Natural killer cell (primary cell): ENCODE measurements at regions of chr1 and their contacts with region 1.

Region 1: DNA sequence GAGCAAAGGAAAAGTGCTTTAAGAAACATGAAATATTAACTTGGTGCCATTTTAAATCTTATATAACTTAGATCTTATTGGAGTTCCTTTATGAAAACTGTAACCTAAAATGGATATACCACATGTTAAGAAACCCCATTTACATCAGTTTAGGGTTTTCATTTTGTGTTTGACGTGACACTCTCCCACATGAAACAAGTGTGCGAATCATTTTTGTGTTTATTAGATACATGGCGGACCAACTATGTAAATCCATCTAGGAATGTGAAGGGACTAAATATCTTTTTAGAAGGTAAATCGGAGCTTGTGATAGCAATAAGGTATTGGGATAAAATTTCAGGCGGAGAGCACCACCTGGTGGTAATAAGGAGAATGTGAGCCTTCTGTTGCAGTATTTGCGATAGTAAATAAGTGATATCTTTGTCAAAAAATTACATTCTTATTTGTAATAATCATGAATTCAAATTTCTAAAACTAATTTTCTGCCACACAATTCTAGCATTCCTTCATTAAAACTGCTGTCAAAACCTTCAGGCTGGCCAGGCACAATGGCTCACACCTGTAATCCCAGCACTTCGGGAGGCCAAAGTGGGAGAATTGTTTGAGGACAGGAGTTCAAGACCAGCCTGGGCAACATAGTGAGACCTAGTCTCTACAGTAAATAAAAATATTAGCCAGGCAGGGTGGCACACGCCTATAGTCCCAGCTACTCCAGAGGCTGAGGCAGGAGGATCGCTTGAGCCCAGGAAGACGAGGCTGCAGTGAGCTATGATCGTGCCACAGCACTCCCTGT is 31.3 kb downstream of the SMAP2 start:
- DNase-seq: peak in 1 of 2 donors; percentile 88
- ATAC-seq: peak; percentile 78 to 79 (median 79)
- H3K4me3 ChIP-seq: no peak overlapping the region
- H3K4me3 Mint-ChIP-seq: peak overlapping the region; percentile 55
- H3K27ac ChIP-seq: peak overlapping the region; percentile 23
- H3K27ac Mint-ChIP-seq: peak overlapping the region; percentile 84 to 89
- H3K4me1 ChIP-seq: peaks cover 41% of the 10 kb centered on the region
- H3K4me1 Mint-ChIP-seq: peaks cover 30 to 31% of the 10 kb centered on the region in 2 donors
- H3K27me3 ChIP-seq: no peaks in the 10 kb centered on the region
- H3K27me3 Mint-ChIP-seq: no peaks in the 10 kb centered on the region
- CTCF ChIP-seq: peak; percentile 92

Region 2: DNA sequence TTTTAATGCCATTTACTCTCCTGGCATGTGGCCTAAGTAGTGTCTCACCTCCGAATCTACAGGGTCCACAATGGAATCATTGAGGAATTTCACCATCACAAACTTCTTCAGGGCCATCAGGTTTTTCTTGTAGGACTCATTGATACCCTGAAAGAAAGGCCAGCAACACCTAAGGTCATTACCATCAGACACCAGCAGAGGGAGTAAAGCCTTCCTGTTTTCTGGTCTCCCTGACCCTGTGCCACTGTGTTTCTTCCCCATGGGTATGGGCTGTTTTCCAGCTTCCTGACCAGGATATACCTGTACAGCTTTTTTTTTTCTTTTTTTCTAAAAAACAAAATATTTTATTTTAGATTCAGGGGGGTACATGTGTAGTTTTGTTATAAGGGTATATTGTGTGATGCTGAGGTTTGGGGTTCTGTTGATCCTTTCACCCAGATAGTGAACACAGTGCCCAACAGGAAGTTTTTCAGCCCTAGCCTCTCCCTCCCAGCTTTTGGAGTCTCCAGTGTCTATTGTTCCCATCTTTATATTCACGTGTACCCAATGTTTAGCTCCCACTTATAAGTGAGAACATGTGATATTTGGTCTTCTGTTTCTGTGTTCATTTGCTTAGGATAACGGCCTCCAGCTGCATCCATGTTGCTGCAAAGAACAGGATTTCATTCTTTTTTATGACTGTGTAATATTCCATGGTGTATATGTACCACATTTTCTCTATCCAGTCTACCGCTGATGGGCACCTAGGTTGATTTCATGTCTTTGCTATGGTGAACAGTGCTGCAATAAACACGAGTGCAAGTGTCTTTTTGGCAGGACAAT is 326.1 kb before region 1 on chr1:
- intact Hi-C with region 1: loop called (anchors 10 kb)
- DNase-seq: peak in 1 of 2 donors; percentile 81
- ATAC-seq: peak; percentile 81 to 95 (median 83)
- H3K4me3 ChIP-seq: no peak overlapping the region
- H3K4me3 Mint-ChIP-seq: no peak overlapping the region
- H3K27ac ChIP-seq: no peak overlapping the region
- H3K27ac Mint-ChIP-seq: peak overlapping the region; percentile 42 to 44
- H3K4me1 ChIP-seq: peaks cover 6% of the 10 kb centered on the region
- H3K4me1 Mint-ChIP-seq: peaks cover 0 to 21% of the 10 kb centered on the region in 2 donors
- H3K27me3 ChIP-seq: no peaks in the 10 kb centered on the region
- H3K27me3 Mint-ChIP-seq: no peaks in the 10 kb centered on the region
- CTCF ChIP-seq: peak; percentile 84

Region 3: DNA sequence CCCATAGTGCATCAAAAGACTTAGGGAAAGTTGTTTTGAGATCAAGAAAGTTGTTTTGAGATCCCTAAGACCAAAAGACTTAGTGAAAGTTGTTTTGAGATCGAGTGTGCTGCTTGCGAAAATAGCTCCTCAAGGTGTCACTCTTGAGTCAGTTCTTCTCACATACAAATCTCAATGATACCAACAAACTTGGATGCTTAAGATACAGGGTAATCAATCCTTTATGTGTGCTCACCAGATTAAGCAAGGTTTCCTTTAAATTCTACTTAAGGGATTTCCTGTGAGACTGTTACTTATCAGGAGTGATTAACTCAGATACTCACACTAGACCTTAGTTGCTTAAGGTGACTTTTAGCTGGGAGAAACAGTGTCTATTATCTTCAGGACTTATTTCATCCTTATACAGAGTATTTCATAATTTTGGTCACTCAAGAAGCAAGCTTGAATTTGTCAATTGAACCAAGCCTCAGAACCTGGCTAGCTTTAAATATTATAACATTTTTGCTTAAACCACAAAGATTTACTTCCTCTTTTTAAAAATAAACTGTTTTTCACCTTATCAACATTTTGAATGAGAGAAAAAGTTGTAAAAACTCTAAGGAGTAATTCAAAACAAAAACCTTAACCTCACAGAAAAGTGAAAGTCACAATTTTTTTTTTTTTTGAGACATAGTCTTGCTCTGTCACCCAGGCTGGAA is 251.6 kb before region 1 on chr1:
- intact Hi-C with region 1: loop called (anchors 2 kb)
- DNase-seq: peak in 1 of 2 donors; percentile 85
- ATAC-seq: peak; percentile 66 to 89 (median 75)
- H3K4me3 ChIP-seq: no peak overlapping the region
- H3K4me3 Mint-ChIP-seq: no peak overlapping the region
- H3K27ac ChIP-seq: peak overlapping the region; percentile 31
- H3K27ac Mint-ChIP-seq: no peak overlapping the region
- H3K4me1 ChIP-seq: no peaks in the 10 kb centered on the region
- H3K4me1 Mint-ChIP-seq: peaks cover 0 to 5% of the 10 kb centered on the region in 2 donors
- H3K27me3 ChIP-seq: no peaks in the 10 kb centered on the region
- H3K27me3 Mint-ChIP-seq: peaks cover 3 to 12% of the 10 kb centered on the region in 2 donors
- CTCF ChIP-seq: peak; percentile 79

Region 4: GRCh38 chr1:40338745-40339424 is 66.0 kb before region 1 on chr1:
- intact Hi-C with region 1: loop called (anchors 1 kb)
- DNase-seq: peak; percentile 84 to 94
- ATAC-seq: peak; percentile 92 to 100 (median 99)
- H3K4me3 ChIP-seq: no peak overlapping the region
- H3K4me3 Mint-ChIP-seq: no peak overlapping the region
- H3K27ac ChIP-seq: no peak overlapping the region
- H3K27ac Mint-ChIP-seq: peak overlapping the region in 1 of 2 donors; percentile 32
- H3K4me1 ChIP-seq: peaks cover 13% of the 10 kb centered on the region
- H3K4me1 Mint-ChIP-seq: peaks cover 6 to 7% of the 10 kb centered on the region in 2 donors
- H3K27me3 ChIP-seq: no peaks in the 10 kb centered on the region
- H3K27me3 Mint-ChIP-seq: peaks cover 0 to 8% of the 10 kb centered on the region in 2 donors
- CTCF ChIP-seq: peak; percentile 99

Region 5: DNA sequence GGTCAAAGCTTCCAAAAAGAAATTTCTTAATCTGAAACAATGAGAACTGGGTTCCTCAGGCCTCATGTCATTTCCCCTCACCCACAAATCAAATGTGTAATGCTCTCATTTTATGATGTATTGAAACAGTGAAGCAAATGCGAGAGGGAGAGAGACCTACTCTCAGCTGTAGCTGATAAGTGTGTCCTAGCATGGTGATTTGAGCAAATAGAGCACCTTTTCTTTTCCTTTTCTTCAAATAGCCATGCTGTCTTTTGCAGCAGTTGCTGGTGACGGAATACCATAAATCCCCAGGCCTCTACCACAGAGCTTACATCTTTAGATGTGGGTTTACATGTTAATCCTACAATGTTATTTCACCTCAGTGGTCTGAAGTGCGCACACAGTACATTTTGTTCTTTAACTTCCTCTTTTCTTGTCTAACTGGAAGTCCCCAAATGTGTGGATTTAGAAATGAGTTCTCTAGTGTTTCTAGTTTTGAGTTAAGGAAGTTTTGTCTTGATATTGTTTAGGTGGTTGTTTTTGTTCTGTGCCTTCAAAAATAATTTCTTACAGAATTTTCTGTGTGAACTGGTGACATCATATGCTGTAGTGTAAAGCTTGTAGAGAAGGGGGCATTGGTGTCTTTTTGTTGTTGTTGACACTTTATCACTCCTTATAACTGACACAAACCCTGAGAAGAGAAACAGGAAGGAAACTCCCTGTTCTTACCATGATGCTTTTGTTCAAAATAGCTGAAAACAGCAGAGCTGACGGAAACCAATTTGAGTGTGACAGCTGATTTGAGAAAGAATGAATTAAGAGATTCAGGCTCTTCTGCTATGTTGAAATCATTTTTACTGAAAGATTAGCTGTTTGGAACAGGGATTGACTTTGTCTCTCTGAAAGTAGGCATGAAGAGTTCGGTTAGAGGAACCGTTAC is 19.2 kb before region 1 on chr1:
- intact Hi-C with region 1: loop called (anchors 2 kb)
- DNase-seq: peak; percentile 37 to 94
- ATAC-seq: peak; percentile 75 to 91 (median 87)
- H3K4me3 ChIP-seq: peak overlapping the region; percentile 19
- H3K4me3 Mint-ChIP-seq: peak overlapping the region; percentile 87
- H3K27ac ChIP-seq: peak overlapping the region; percentile 100
- H3K27ac Mint-ChIP-seq: peak overlapping the region; percentile 98 to 99
- H3K4me1 ChIP-seq: peaks cover 80% of the 10 kb centered on the region
- H3K4me1 Mint-ChIP-seq: peaks cover 87% of the 10 kb centered on the region in 2 donors
- H3K27me3 ChIP-seq: no peaks in the 10 kb centered on the region
- H3K27me3 Mint-ChIP-seq: no peaks in the 10 kb centered on the region
- CTCF ChIP-seq: no peak

Region 6: DNA sequence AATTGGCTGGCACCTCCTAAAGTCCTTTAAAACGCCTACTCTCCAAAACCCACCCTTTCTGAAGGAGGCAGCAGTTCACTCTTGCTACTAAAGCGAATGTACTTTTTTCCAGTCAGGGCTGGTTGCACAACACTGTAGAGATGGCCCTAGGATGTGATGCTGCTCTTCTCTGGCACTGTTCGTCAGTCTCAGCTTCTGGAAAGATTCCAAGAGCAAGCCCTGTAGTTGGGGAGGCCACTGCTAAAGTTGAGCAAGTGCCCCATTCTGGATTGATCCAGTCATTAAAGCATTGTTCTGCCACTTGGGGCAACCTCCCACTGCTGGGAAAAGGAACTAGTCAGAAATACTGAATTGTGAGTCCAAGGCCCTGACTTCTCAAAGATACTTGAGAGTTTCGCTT is 350.2 kb after region 1 on chr1:
- intact Hi-C with region 1: no loop called
- DNase-seq: no peak
- ATAC-seq: no peak
- H3K4me3 ChIP-seq: no peak overlapping the region
- H3K4me3 Mint-ChIP-seq: no peak overlapping the region
- H3K27ac ChIP-seq: no peak overlapping the region
- H3K27ac Mint-ChIP-seq: no peak overlapping the region
- H3K4me1 ChIP-seq: no peaks in the 10 kb centered on the region
- H3K4me1 Mint-ChIP-seq: peaks cover 0 to 4% of the 10 kb centered on the region in 2 donors
- H3K27me3 ChIP-seq: no peaks in the 10 kb centered on the region
- H3K27me3 Mint-ChIP-seq: no peaks in the 10 kb centered on the region
- CTCF ChIP-seq: no peak